Posterior cingulate gyrus (tissue), 11 donors: ENCODE measurements at regions of chr4 and their contacts with region 1.

Region 1: DNA sequence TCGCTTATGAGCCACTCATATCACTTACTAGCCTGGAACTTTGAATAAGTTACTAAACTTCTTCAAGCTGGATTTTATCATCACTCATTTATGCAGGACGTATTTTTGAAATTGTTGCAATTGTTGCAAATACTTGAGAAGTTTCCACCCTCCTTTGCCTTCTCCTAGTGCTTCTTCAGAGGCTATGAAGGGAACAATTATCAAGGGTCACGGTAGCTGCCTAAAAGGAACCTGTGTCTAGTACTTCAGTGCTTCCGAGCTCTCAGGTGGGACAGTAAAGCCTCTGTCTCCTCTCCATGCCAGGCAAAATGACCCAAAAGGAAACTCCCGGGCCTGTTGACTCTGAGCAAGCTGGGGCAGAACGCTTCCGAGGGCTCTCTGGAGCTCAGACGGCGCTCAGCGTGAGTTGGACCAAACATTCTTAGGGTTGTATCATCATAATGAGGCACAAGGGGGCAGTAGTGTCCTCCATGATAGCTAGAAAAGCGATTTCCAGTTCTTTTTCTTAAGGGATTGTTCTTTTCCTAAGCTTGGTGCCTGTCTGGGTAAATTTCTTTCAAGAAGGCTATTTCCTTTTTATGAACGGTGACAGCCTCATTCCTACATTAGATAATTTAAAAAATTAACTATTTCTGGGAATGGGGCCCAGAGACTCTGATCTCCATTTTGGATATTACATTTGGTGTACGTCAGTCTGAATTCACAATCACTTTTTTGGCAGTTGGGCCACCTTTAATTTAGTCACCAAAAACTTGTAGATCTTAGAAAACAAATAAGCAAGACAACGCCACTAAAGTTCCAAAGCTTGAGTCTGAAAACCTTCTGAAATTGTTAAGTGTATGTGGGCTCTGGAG is 73.1 kb downstream of the PACRGL start:
- DNase-seq: peak in 8 of 10 donors; percentile 13 to 85 (median 44)

Region 2: GRCh38 chr4:20493861-20494261 is 279.5 kb before region 1 on chr4:
- intact Hi-C with region 1: no loop called
- DNase-seq: no peak

Region 3: GRCh38 chr4:21126014-21126512 is 352.7 kb after region 1 on chr4:
- intact Hi-C with region 1: loop called (anchors 10 kb)
- DNase-seq: no peak

Region 4: GRCh38 chr4:21469438-21470300 is 696.3 kb after region 1 on chr4:
- intact Hi-C with region 1: loop called (anchors 2 kb)
- DNase-seq: no peak